Activated CD4-positive, alpha-beta memory T cell treated with anti-CD3 and anti-CD28 coated beads for 36 hours (primary cell): ENCODE measurements at regions of chr4 and their contacts with region 1.

Region 1: DNA sequence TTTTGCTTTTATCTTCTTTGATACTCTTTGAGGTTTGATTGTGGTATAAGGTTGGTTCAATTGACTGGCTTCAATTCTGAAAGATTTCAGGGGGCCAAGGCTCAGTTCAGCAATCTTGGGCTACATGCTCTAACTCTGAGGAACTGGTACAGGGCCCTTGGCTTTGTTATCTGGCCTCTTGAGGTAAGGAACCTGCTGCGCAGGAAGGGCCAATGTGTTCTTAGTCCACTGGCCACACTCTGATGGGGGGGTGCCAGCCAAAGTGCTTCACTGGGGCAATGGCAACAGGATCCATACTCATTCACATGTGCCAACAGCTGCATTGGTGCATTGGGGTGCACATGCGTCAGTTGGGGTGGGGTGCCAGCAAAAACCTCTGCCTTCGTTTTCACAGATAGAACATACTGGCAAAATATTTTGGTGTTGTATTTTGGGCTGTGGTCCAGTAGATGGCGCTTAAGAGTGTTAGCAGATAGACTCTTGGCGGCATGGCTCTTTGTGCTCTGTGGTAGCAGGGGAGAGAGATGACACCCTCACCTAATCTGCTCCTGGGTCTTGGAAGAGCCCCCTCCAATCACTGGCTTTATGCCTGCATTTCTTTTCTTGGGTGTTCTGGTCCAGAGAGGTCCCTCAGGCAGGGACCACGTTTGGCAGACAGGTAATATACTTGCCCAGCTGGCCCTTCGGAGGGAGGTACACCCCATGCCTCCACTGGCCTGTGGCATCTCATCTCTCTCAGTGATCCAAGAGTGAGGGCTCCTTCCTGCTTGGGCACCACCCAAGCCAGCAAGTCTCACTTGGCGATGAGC is 42.9 kb downstream of the NDST3 start:
- DNase-seq: peak; percentile 12
- H3K4me3 Mint-ChIP-seq: no peak overlapping the region
- H3K27ac Mint-ChIP-seq: no peak overlapping the region
- H3K4me1 Mint-ChIP-seq: no peaks in the 10 kb centered on the region
- H3K27me3 Mint-ChIP-seq: peaks cover 4% of the 10 kb centered on the region

Region 2: GRCh38 chr4:118113220-118113619 is 36.1 kb after region 1 on chr4:
- CTCF ChIA-PET with region 1: no interaction called
- POLR2A ChIA-PET with region 1: no interaction called
- intact Hi-C with region 1: no loop called
- DNase-seq: no peak
- H3K4me3 Mint-ChIP-seq: no peak overlapping the region
- H3K27ac Mint-ChIP-seq: no peak overlapping the region
- H3K4me1 Mint-ChIP-seq: no peaks in the 10 kb centered on the region
- H3K27me3 Mint-ChIP-seq: no peaks in the 10 kb centered on the region

Region 3: DNA sequence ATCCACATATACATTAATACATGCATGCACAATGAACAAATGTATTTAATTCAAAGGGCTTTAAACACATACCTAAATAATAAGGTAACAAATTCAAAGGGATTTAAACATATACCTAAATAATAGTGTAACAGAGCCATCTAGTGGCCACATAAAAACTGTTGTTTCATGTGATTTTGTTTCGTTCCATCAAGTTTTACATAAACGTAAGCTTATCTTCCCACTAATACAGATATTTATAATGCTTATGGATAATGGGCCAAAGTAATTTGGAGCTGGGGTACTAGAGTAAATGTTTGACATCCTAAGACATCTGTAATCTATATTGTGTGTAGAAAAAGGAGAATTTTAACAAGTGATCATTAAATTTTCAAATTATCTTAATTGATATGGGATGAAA is 193.3 kb after region 1 on chr4:
- CTCF ChIA-PET with region 1: no interaction called
- POLR2A ChIA-PET with region 1: no interaction called
- intact Hi-C with region 1: loop called (anchors 1 kb)
- DNase-seq: no peak
- H3K4me3 Mint-ChIP-seq: no peak overlapping the region
- H3K27ac Mint-ChIP-seq: no peak overlapping the region
- H3K4me1 Mint-ChIP-seq: peaks cover 2% of the 10 kb centered on the region
- H3K27me3 Mint-ChIP-seq: peaks cover 1% of the 10 kb centered on the region

Region 4: GRCh38 chr4:118327554-118328241 is 250.5 kb after region 1 on chr4:
- CTCF ChIA-PET with region 1: no interaction called
- POLR2A ChIA-PET with region 1: no interaction called
- intact Hi-C with region 1: loop called (anchors 5 kb)
- DNase-seq: no peak
- H3K4me3 Mint-ChIP-seq: no peak overlapping the region
- H3K27ac Mint-ChIP-seq: no peak overlapping the region
- H3K4me1 Mint-ChIP-seq: no peaks in the 10 kb centered on the region
- H3K27me3 Mint-ChIP-seq: no peaks in the 10 kb centered on the region